Activated naive CD4-positive, alpha-beta T cell treated with anti-CD3 and anti-CD28 coated beads for 36 hours (primary cell): ENCODE measurements at regions of chr10 and their contacts with region 1.

Region 1: GRCh38 chr10:91632671-91633550 is at the start of gene PPP1R3C:
- DNase-seq: peak; percentile 63
- H3K4me3 Mint-ChIP-seq: peak within 1 kb of the TSS; percentile 71
- H3K27ac Mint-ChIP-seq: no peak within 1 kb of the TSS
- H3K4me1 Mint-ChIP-seq: peaks cover 9% of the 10 kb centered on the region
- H3K27me3 Mint-ChIP-seq: peaks cover 55% of the 10 kb centered on the region
- total RNA-seq, gene PPP1R3C: 0.07 to 0.12 TPM

Region 2: GRCh38 chr10:91389636-91390512 is 243.0 kb before region 1 on chr10:
- CTCF ChIA-PET with region 1: interaction called, 37 read pairs
- intact Hi-C with region 1: loop called (anchors 1 kb)
- DNase-seq: no peak
- H3K4me3 Mint-ChIP-seq: no peak overlapping the region
- H3K27ac Mint-ChIP-seq: no peak overlapping the region
- H3K4me1 Mint-ChIP-seq: peaks cover 4% of the 10 kb centered on the region
- H3K27me3 Mint-ChIP-seq: peaks cover 12% of the 10 kb centered on the region

Region 3: GRCh38 chr10:91493313-91493712 is 139.6 kb before region 1 on chr10:
- CTCF ChIA-PET with region 1: interaction called, 5 read pairs
- intact Hi-C with region 1: loop called (anchors 1 kb)
- DNase-seq: no peak
- H3K4me3 Mint-ChIP-seq: no peak overlapping the region
- H3K27ac Mint-ChIP-seq: no peak overlapping the region
- H3K4me1 Mint-ChIP-seq: no peaks in the 10 kb centered on the region
- H3K27me3 Mint-ChIP-seq: no peaks in the 10 kb centered on the region

Region 4: GRCh38 chr10:91597197-91597881 is 35.6 kb before region 1 on chr10:
- CTCF ChIA-PET with region 1: interaction called, 3 read pairs
- intact Hi-C with region 1: loop called (anchors 1 kb)
- DNase-seq: no peak
- H3K4me3 Mint-ChIP-seq: no peak overlapping the region
- H3K27ac Mint-ChIP-seq: no peak overlapping the region
- H3K4me1 Mint-ChIP-seq: peaks cover 7% of the 10 kb centered on the region
- H3K27me3 Mint-ChIP-seq: peaks cover 6% of the 10 kb centered on the region